ENCODE measurements at regions of chr15 and their contacts with region 1.

Region 1: DNA sequence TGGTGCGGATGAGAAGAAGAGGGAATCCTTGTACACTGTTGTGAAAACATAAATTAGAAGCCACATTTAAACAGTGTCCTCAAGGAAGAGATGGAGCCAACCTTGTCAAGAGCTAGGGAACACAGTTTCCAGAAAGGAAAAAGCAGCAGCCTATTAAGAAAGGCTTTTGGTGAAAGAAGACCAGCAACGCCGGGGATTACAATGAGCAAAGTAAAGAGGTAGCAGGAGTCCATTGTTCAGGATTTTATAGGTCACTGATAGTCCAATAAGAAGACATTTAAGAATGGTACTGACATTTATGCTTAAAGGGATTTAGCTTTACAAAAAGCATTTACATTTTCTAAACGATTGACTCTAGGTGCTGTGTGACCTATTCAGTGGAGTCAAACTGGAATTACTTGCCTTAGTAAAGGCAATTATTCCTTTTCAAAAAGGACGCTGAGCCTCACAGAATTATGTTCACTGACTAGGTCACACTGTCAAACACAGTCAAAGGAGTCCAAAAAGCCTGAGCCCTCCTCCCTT is 40.8 kb downstream of the CSNK1G1 start:
- DNase-seq: no peak
- ATAC-seq: no peak
- H3K4me3 ChIP-seq: no peak overlapping the region
- H3K4me3 Mint-ChIP-seq: no peak overlapping the region
- H3K27ac ChIP-seq: no peak overlapping the region
- H3K27ac Mint-ChIP-seq: peak overlapping the region; percentile 29
- H3K4me1 ChIP-seq: no peaks in the 10 kb centered on the region
- H3K4me1 Mint-ChIP-seq: peaks cover 25% of the 10 kb centered on the region
- H3K27me3 ChIP-seq: no peaks in the 10 kb centered on the region
- H3K27me3 Mint-ChIP-seq: no peaks in the 10 kb centered on the region
- CTCF ChIP-seq: no peak

Region 2: GRCh38 chr15:64333986-64334929 is 19.1 kb after region 1 on chr15:
- CTCF ChIA-PET with region 1: interaction called, 5 read pairs
- POLR2A ChIA-PET with region 1: no interaction called
- intact Hi-C with region 1: loop called in 1 of 2 experiments (anchors 2 kb)
- DNase-seq: peak in 7 of 9 experiments; percentile 6 to 44 (median 30)
- ATAC-seq: peak; percentile 66
- H3K4me3 ChIP-seq: no peak overlapping the region
- H3K4me3 Mint-ChIP-seq: no peak overlapping the region
- H3K27ac ChIP-seq: no peak overlapping the region
- H3K27ac Mint-ChIP-seq: peak overlapping the region; percentile 87
- H3K4me1 ChIP-seq: peaks cover 8% of the 10 kb centered on the region
- H3K4me1 Mint-ChIP-seq: peaks cover 26% of the 10 kb centered on the region
- H3K27me3 ChIP-seq: no peaks in the 10 kb centered on the region
- H3K27me3 Mint-ChIP-seq: no peaks in the 10 kb centered on the region
- CTCF ChIP-seq: no peak